Activated CD4-positive, alpha-beta memory T cell treated with anti-CD3 and anti-CD28 coated beads, Interleukin-2, amount 10 ng/mL, durations not matched to agents 7 days and 5 days (primary cell): ENCODE measurements at regions of chrX and their contacts with region 1.

Region 1: GRCh38 chrX:49100704-49101628 is 21.3 kb upstream of the WDR45 start:
- DNase-seq: peak; percentile 91
- H3K4me3 Mint-ChIP-seq: peak overlapping the region; percentile 87
- H3K27ac Mint-ChIP-seq: peak overlapping the region; percentile 92
- H3K4me1 Mint-ChIP-seq: peaks cover 11% of the 10 kb centered on the region
- H3K27me3 Mint-ChIP-seq: no peaks in the 10 kb centered on the region

Region 2: DNA sequence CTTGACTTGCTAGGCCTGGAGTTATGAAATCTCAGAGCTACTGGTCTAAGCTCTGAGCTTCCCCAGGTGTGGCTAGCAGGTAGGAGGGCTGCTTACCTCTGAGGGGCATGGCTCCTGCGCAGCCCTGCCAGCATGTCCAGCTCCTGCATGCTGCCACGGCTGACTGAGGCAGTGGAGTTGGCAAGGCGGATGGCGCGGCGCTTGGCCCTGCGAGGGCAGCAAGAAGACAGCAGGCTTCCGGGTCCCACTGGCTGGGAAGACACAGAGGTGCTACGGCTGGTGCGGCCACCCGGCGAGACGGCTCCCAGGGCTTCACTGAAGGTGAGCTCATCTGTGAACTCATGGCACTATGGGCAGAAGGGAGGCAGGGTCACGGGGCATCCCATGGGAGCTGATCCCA is 135.0 kb before region 1 on chrX:
- CTCF ChIA-PET with region 1: no interaction called
- POLR2A ChIA-PET with region 1: no interaction called
- DNase-seq: no peak
- H3K4me3 Mint-ChIP-seq: no peak overlapping the region
- H3K27ac Mint-ChIP-seq: no peak overlapping the region
- H3K4me1 Mint-ChIP-seq: peaks cover 2% of the 10 kb centered on the region
- H3K27me3 Mint-ChIP-seq: no peaks in the 10 kb centered on the region

Region 3: GRCh38 chrX:48976086-48976485 is 124.9 kb before region 1 on chrX:
- CTCF ChIA-PET with region 1: no interaction called
- POLR2A ChIA-PET with region 1: no interaction called
- DNase-seq: no peak
- H3K4me3 Mint-ChIP-seq: no peak overlapping the region
- H3K27ac Mint-ChIP-seq: peak overlapping the region; percentile 26
- H3K4me1 Mint-ChIP-seq: peaks cover 23% of the 10 kb centered on the region
- H3K27me3 Mint-ChIP-seq: no peaks in the 10 kb centered on the region

Region 4: GRCh38 chrX:49029876-49030275 is 71.1 kb before region 1 on chrX:
- CTCF ChIA-PET with region 1: no interaction called
- POLR2A ChIA-PET with region 1: no interaction called
- DNase-seq: no peak
- H3K4me3 Mint-ChIP-seq: no peak overlapping the region
- H3K27ac Mint-ChIP-seq: no peak overlapping the region
- H3K4me1 Mint-ChIP-seq: no peaks in the 10 kb centered on the region
- H3K27me3 Mint-ChIP-seq: no peaks in the 10 kb centered on the region

Region 5: DNA sequence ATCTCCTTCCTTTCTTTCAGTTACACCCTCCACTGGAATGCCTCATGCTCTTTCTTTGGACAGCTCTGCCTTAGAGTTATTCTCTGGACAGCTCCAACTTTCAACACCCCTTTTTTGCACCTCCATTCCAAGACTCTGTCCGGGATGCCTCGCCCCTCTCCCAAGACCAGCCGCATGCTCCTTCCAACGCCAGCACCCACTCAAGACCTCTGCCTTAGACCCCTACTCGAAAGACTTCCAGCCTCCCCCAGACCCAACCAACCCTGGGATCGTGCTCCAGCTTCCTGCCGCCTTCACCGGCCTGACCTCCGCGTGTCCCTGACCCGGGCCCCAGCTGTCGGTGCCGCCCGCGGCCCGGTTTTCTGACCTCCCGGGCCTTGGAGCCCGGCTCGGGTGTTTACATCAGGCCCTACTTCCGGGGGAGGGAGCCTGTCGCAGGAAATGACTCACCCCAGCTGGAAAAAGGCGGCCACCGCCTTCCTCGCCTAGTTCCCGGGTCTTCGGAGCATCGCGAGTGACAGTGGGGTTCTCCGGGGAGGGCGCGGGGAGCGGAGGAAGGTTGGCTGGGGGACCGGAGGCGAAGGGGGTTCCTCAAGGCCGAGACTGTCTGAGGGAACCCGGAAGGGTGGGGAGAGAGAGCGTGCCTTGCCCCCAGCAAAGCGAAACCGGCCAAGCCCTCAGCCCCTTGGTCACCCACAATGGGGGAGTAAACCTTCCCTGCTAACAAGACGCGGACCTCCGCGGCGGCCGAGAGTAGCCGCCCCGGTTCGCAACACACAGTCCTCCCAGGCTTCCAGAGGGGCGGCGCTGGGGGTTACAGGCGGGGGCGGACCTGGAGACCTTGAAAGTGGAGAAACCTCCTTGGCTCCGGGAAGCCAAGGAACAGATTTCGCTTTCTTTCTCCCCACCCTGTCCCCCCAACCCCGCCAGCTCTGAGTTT is 21.2 kb before region 1 on chrX and contains the start of gene WDR45:
- CTCF ChIA-PET with region 1: no interaction called
- POLR2A ChIA-PET with region 1: interaction called, 10 read pairs
- DNase-seq: peak; percentile 81
- H3K4me3 Mint-ChIP-seq: peak within 1 kb of the TSS; percentile 94
- H3K27ac Mint-ChIP-seq: peak within 1 kb of the TSS; percentile 94
- H3K4me1 Mint-ChIP-seq: peaks cover 20% of the 10 kb centered on the region
- H3K27me3 Mint-ChIP-seq: no peaks in the 10 kb centered on the region
- total RNA-seq, gene WDR45: 51.1 to 58.7 TPM